ENCODE measurements at regions of chr7 and their contacts with region 1.

Region 1: DNA sequence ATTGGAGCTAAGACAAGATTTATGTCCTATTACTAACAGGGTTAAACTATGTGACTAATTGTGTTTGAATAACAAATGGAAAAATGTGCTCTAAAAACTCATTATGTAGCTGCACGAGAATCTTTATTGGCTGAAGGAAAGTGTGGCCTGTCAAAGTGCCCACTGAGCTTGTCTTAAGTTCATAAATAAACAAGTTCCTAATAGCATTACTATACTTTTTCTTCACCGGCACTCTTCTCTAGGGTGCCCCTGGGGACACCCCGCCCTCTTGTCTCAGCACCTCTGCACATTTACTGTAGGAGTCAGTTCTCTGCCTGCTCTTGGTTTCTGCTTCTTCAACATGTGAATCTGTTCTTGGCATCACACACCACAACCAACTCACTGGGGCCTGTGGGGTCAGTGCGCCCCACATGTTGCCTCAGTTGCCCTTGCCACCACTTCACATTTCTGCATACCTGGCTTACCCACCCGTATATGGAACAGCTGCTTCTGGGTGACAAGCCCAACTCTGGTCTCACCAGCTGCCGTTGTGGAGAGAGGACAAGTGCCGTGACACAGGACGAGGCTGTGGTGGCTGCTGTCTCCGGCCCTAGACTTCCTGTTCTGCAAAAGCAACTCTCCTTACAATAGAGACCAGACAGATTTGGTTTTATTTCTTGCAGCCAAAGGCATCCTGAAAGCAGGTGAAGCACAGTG is 96.3 kb upstream of the DDC start:
- DNase-seq: peak; percentile 69
- H3K4me3 Mint-ChIP-seq: peak overlapping the region; percentile 74
- H3K27ac Mint-ChIP-seq: peak overlapping the region; percentile 96
- H3K4me1 Mint-ChIP-seq: peaks cover 83% of the 10 kb centered on the region
- H3K27me3 Mint-ChIP-seq: no peaks in the 10 kb centered on the region

Region 2: DNA sequence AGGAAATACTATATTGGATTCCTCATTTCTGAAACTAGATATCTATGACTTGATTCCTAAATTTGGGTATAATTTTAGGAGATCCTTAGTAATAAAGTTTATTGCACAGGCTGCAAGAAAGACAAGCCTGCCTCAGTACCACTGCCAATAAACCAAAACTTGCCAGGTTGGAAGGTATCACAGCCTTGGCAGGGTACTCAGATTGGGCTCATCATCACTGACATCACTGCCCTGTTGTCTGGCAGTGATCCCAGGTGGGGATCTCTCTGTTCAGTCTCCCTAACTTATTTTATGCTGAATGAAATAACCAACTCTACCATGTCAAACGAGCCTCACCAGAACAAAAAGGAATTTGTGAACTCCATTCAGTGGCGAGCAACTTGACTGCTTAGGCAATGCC is 230.2 kb before region 1 on chr7:
- CTCF ChIA-PET with region 1: no interaction called
- POLR2A ChIA-PET with region 1: no interaction called
- DNase-seq: no peak
- H3K4me3 Mint-ChIP-seq: no peak overlapping the region
- H3K27ac Mint-ChIP-seq: no peak overlapping the region
- H3K4me1 Mint-ChIP-seq: no peaks in the 10 kb centered on the region
- H3K27me3 Mint-ChIP-seq: no peaks in the 10 kb centered on the region

Region 3: GRCh38 chr7:50739744-50740435 is 78.4 kb after region 1 on chr7:
- CTCF ChIA-PET with region 1: no interaction called
- POLR2A ChIA-PET with region 1: interaction called, 10 read pairs
- DNase-seq: peak; percentile 84
- H3K4me3 Mint-ChIP-seq: peak overlapping the region; percentile 34
- H3K27ac Mint-ChIP-seq: peak overlapping the region; percentile 71
- H3K4me1 Mint-ChIP-seq: peaks cover 26% of the 10 kb centered on the region
- H3K27me3 Mint-ChIP-seq: no peaks in the 10 kb centered on the region